Right ventricle myocardium superior (tissue), 1 donor: ENCODE measurements at regions of chr21 and their contacts with region 1.

Region 1: GRCh38 chr21:27564684-27565301 is 597.9 kb upstream of the ADAMTS5 start:
- DNase-seq: peak; percentile 43
- ATAC-seq: peak; percentile 87

Region 2: DNA sequence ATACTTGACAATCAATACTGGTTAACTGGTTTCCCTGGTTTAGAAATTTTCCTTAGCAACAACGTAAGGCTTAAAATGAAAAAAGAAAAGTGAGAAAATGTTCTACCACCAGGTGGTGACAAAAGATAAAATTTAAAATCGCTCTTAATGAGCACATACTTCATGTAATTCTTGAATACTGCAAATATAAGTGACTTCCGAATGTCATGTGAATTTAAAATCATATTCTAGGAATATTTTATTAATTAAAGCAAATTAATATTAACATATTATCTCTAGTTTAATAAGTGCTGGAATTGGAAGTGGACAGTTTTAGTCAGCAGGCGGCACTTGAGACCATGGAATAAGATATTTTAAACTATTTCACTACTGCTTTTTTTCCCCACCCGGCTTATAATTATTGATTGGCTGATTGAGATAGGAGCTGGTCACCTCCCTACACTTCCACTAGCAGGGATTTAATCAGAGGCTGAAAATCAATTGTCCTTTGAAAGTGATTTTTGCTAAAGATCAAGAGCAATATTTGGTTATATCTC is 714.6 kb before region 1 on chr21:
- intact Hi-C with region 1: loop called (anchors 10 kb)
- DNase-seq: no peak
- ATAC-seq: no peak

Region 3: DNA sequence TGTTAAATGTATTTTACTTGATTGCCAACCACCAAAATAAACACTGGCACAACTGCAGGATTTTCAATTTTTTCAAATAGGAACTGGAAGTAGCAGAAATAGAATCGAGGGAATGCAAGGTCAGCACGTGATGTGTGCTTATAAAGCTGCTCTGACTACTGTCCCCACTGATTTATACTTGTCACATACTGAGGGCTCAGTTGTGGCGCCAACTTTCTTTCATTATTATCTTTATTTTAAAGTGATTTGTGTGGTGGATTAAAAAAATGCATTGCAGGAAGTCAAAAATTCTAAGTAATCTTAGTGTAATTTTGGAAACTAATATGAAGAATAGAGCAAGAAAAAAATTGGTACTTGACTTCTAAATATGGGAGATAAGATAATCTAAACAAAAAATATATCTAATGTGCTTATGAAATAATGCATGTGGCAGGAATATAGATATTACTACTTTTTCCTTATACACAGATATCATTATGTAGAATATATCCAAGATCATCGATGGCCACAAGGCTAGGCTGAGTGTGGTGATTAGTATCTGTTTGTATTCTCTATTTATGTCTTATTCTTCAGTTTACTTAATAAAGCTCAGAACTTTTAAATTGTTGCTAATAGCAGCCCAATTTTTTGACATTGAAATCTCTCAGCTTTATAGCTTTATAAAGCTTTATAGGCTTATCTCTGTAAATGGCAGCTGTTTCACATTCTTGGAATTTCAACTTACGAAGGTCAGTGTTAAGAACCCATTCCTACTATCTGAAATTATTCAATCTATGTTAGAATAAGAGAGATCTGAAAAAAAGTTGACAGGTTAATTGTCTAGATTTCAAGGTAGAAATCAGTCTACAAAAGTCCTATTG is 193.4 kb before region 1 on chr21:
- intact Hi-C with region 1: loop called (anchors 5 kb)
- DNase-seq: no peak
- ATAC-seq: peak; percentile 84